ENCODE measurements at regions of chr17 and their contacts with region 1.

Region 1: GRCh38 chr17:8073627-8074484 is 13.7 kb downstream of the ALOX12B start:
- DNase-seq: peak; percentile 77 to 88 (median 82)
- H3K4me3 ChIP-seq: peak overlapping the region in 1 of 2 donors; percentile 33
- H3K4me3 Mint-ChIP-seq: peak overlapping the region; percentile 74 to 97 (median 86)
- H3K27ac ChIP-seq: no peak overlapping the region
- H3K27ac Mint-ChIP-seq: peak overlapping the region in 6 of 7 donors; percentile 37 to 92 (median 82)
- H3K4me1 ChIP-seq: peaks cover 27% of the 10 kb centered on the region
- H3K4me1 Mint-ChIP-seq: peaks cover 15 to 29% (median 23%) of the 10 kb centered on the region in 4 donors
- H3K27me3 ChIP-seq: peaks cover 24% of the 10 kb centered on the region
- H3K27me3 Mint-ChIP-seq: peaks cover 12 to 18% of the 10 kb centered on the region in 2 donors

Region 2: GRCh38 chr17:8041979-8042378 is 31.9 kb before region 1 on chr17:
- CTCF ChIA-PET with region 1: no interaction called
- POLR2A ChIA-PET with region 1: no interaction called
- intact Hi-C with region 1: no loop called
- DNase-seq: no peak
- H3K4me3 ChIP-seq: no peak overlapping the region
- H3K4me3 Mint-ChIP-seq: no peak overlapping the region
- H3K27ac ChIP-seq: no peak overlapping the region
- H3K27ac Mint-ChIP-seq: no peak overlapping the region
- H3K4me1 ChIP-seq: no peaks in the 10 kb centered on the region
- H3K4me1 Mint-ChIP-seq: peaks cover 0 to 4% (median 0%) of the 10 kb centered on the region in 4 donors
- H3K27me3 ChIP-seq: no peaks in the 10 kb centered on the region
- H3K27me3 Mint-ChIP-seq: peaks cover 15 to 16% of the 10 kb centered on the region in 2 donors

Region 3: DNA sequence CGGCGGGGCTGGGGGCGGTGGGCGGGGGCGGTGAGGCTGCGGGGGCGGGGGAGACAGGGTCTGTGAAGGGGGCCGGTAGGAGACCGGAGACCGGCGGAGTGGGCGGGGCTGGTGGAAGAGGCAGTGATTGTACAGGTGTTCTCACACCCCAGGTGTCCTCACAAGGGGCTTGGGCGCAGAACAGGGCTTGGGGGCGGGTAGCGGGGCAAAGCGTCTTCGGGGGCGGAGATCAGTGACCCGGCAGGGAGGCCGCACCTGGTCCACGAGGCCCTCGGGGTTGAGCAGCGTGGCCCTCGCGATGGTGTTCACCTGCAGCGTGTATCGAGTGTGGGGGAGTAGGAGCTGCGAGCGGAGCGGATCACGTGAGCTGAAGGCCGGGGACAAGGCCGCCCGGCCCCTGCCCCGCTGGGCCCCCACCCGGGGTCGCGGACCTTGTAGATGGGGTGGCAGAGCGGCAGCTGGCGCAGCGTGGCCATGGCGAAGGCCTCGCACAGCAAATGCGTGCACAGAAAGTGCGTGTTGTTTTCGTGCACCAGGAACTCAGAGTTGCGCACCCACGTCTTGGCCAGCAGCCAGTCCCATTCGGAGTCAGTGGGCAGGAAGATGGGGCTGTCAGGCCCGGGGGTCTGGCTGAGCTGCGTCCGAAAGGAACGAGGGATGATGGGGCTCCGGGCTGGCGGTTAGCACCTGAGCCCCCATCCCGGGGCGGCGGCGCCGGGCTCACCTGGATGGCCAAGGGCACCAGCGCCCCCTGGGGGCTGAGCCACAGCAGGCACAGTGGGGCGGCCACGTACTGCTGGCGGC is 36.0 kb after region 1 on chr17:
- CTCF ChIA-PET with region 1: interaction called, 18 read pairs
- POLR2A ChIA-PET with region 1: interaction called, 13 read pairs
- intact Hi-C with region 1: loop called (anchors 1 kb)
- DNase-seq: peak; percentile 78 to 86 (median 82)
- H3K4me3 ChIP-seq: peak overlapping the region; percentile 66 to 84
- H3K4me3 Mint-ChIP-seq: peak overlapping the region; percentile 42 to 78 (median 72)
- H3K27ac ChIP-seq: no peak overlapping the region
- H3K27ac Mint-ChIP-seq: no peak overlapping the region
- H3K4me1 ChIP-seq: peaks cover 5% of the 10 kb centered on the region
- H3K4me1 Mint-ChIP-seq: peaks cover 0 to 5% (median 2%) of the 10 kb centered on the region in 4 donors
- H3K27me3 ChIP-seq: peaks cover 26% of the 10 kb centered on the region
- H3K27me3 Mint-ChIP-seq: peaks cover 15 to 22% of the 10 kb centered on the region in 2 donors

Region 4: DNA sequence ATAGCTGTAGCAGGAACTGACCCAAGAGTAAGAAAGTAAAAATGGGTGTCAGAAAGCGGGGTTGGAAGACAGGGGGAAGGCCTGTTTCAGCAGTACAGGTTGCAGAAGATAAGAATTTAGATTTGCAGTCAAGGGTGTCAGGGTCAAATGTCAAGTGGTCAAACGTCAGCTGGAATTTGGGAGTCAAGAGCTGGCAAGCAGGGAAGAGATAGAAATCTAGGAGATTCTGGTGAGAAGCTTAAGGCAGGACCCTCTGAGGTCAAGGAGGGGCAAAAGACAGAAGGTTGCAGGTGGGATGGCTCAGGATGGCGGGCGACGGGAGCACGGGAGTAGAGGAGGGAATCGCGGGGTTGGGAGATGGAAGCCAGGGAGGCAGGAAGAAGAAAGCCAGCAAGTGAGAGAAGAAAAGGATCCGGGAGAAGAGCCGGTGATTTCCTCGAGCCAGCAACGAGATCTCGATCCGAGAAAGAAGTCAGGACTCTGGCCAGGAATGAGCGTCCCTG is 221.0 kb after region 1 on chr17:
- CTCF ChIA-PET with region 1: interaction called, 15 read pairs
- POLR2A ChIA-PET with region 1: interaction called, 3 read pairs
- intact Hi-C with region 1: loop called (anchors 5 kb)
- DNase-seq: no peak
- H3K4me3 ChIP-seq: peak overlapping the region; percentile 78 to 92
- H3K4me3 Mint-ChIP-seq: peak overlapping the region; percentile 91 to 97 (median 94)
- H3K27ac ChIP-seq: peak overlapping the region; percentile 73
- H3K27ac Mint-ChIP-seq: peak overlapping the region; percentile 92 to 98 (median 96)
- H3K4me1 ChIP-seq: peaks cover 26% of the 10 kb centered on the region
- H3K4me1 Mint-ChIP-seq: peaks cover 18 to 50% (median 29%) of the 10 kb centered on the region in 4 donors
- H3K27me3 ChIP-seq: no peaks in the 10 kb centered on the region
- H3K27me3 Mint-ChIP-seq: no peaks in the 10 kb centered on the region

Region 5: DNA sequence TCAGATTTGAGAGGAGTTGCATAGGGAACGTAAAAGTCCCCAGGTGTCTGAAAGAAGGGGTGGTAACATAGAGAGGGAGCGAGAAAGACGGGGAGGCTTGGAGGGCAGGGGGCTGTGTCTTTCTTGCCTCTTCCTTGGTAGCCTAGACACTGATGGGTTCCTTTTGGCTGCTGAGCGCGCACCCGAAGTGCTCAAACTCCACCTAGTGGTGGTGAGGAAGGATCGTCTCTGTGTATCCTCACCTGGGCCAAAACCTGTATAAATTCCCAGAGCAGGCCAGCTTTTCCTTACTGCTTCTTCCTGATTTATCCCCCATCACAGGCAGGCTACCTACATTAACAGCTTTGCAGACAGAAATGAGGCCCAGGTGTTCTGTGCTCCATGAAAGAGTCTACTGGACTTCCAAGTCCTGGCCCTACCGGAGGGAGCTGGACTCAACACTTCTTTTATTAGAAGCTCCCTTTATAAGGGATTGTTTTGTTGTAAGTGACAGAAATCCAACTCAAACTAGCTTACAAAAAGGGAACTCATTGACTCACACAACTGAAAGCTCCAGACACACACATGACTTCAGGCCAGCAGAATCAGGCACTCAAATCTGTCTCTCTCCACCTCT is 226.9 kb after region 1 on chr17:
- CTCF ChIA-PET with region 1: interaction called, 15 read pairs
- POLR2A ChIA-PET with region 1: interaction called, 3 read pairs
- intact Hi-C with region 1: loop called (anchors 5 kb)
- DNase-seq: peak; percentile 62 to 76 (median 72)
- H3K4me3 ChIP-seq: no peak overlapping the region
- H3K4me3 Mint-ChIP-seq: peak overlapping the region in 2 of 8 donors; percentile 2
- H3K27ac ChIP-seq: no peak overlapping the region
- H3K27ac Mint-ChIP-seq: peak overlapping the region in 6 of 7 donors; percentile 47 to 90 (median 83)
- H3K4me1 ChIP-seq: peaks cover 7% of the 10 kb centered on the region
- H3K4me1 Mint-ChIP-seq: peaks cover 7 to 16% (median 11%) of the 10 kb centered on the region in 4 donors
- H3K27me3 ChIP-seq: no peaks in the 10 kb centered on the region
- H3K27me3 Mint-ChIP-seq: peaks cover 0 to 1% of the 10 kb centered on the region in 2 donors